PC-3 (cell line): ENCODE measurements at regions of chr3 and their contacts with region 1.

Region 1: DNA sequence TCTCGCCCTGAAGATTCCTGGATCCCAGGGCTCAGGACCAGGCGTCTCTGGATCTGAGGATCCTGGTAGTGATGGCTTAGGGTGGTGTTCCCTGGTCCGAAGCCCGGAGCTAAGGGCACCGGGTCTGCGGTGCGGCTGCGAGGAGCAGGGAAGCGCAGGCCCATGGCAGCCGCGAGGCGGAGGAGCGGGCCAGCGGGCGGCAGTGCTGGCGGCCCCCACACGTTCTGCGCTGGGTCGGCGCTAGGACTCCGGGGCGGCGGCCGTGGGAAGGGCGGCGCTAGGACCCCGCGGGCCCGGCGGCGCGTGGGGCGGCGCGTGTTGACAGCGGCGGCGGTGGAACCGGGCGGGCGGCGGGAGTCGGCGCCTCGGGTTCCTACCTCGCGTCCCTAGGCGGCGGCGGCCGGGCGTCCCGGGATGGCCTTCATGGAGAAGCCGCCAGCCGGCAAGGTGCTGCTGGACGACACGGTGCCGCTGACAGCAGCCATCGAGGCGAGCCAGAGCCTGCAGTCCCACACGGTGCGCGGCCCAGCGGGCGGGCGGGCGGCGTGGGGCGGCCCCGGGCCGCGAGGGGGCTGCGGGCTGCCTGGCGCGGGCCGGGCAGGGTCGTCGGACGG is at the start of gene PXK:
- DNase-seq: peak; percentile 74
- ATAC-seq: peak; percentile 78
- H3K4me3 ChIP-seq: peak within 1 kb of the TSS; percentile 95
- H3K27ac ChIP-seq: peak within 1 kb of the TSS; percentile 91
- H3K4me1 ChIP-seq: peaks cover 36% of the 10 kb centered on the region
- H3K27me3 ChIP-seq: no peaks in the 10 kb centered on the region
- CTCF ChIP-seq: peak; percentile 26; the same call in 1 of the 2 replicates
- total RNA-seq, gene PXK: 11.1 and 14.5 TPM in 2 replicates

Region 2: GRCh38 chr3:58305882-58306711 is 26.6 kb before region 1 on chr3 and contains the starts of genes HTD2 and RPP14:
- CTCF ChIA-PET with region 1: interaction called, 4 read pairs
- POLR2A ChIA-PET with region 1: no interaction called
- intact Hi-C with region 1: loop called (anchors 2 kb)
- DNase-seq: peak; percentile 99
- ATAC-seq: peak; percentile 92
- H3K4me3 ChIP-seq: peak within 1 kb of the TSS; percentile 95
- H3K27ac ChIP-seq: peak within 1 kb of the TSS; percentile 75
- H3K4me1 ChIP-seq: peaks cover 11% of the 10 kb centered on the region
- H3K27me3 ChIP-seq: no peaks in the 10 kb centered on the region
- CTCF ChIP-seq: peak; percentile 90
- total RNA-seq, gene HTD2: 4.9 and 6.9 TPM in 2 replicates
- total RNA-seq, gene RPP14: 28.8 and 30.0 TPM in 2 replicates

Region 3: GRCh38 chr3:58383904-58384303 is 51.2 kb after region 1 on chr3:
- CTCF ChIA-PET with region 1: no interaction called
- POLR2A ChIA-PET with region 1: interaction called, 3 read pairs
- intact Hi-C with region 1: loop called (anchors 1 kb)
- DNase-seq: peak; percentile 99
- ATAC-seq: peak; percentile 89
- H3K4me3 ChIP-seq: no peak overlapping the region
- H3K27ac ChIP-seq: peak overlapping the region; percentile 92
- H3K4me1 ChIP-seq: peaks cover 42% of the 10 kb centered on the region
- H3K27me3 ChIP-seq: no peaks in the 10 kb centered on the region
- CTCF ChIP-seq: no peak

Region 4: GRCh38 chr3:58491506-58492402 is 159.1 kb after region 1 on chr3 and contains the start of gene KCTD6:
- CTCF ChIA-PET with region 1: no interaction called
- POLR2A ChIA-PET with region 1: no interaction called
- intact Hi-C with region 1: loop called (anchors 1 kb)
- DNase-seq: peak; percentile 97
- ATAC-seq: peak; percentile 83
- H3K4me3 ChIP-seq: peak within 1 kb of the TSS; percentile 91
- H3K27ac ChIP-seq: no peak within 1 kb of the TSS
- H3K4me1 ChIP-seq: peaks cover 40% of the 10 kb centered on the region
- H3K27me3 ChIP-seq: no peaks in the 10 kb centered on the region
- CTCF ChIP-seq: peak; percentile 55
- total RNA-seq, gene KCTD6: 13.1 and 13.6 TPM in 2 replicates